ENCODE measurements at regions of chr2 and their contacts with region 1.

Region 1: DNA sequence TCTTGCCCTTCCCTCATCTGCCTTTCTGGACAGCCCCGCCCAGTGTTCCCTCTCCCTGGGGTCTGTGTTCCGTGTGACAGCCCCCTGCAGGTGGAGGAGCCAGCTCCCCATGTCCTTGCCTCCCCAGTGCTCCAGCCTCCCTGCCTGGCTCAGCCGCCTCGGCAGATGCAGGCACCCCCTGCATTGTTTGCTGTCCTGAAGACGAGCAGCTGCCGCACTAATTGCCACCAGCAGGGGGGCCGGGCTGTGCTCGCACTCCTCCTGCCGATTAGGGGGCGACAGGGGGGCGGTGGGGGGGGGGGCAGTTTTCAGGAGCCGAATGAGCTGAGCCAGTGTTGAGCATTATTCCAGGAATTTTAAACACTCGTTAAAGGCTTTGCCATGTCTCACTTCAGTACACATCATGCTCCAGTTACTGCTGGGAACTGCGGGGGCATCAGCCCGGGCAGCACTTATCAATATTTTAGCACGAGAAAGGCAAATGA is 23.3 kb downstream of the SIX3 start:
- DNase-seq: no peak
- H3K4me3 ChIP-seq: no peak overlapping the region
- CTCF ChIP-seq: no peak

Region 2: DNA sequence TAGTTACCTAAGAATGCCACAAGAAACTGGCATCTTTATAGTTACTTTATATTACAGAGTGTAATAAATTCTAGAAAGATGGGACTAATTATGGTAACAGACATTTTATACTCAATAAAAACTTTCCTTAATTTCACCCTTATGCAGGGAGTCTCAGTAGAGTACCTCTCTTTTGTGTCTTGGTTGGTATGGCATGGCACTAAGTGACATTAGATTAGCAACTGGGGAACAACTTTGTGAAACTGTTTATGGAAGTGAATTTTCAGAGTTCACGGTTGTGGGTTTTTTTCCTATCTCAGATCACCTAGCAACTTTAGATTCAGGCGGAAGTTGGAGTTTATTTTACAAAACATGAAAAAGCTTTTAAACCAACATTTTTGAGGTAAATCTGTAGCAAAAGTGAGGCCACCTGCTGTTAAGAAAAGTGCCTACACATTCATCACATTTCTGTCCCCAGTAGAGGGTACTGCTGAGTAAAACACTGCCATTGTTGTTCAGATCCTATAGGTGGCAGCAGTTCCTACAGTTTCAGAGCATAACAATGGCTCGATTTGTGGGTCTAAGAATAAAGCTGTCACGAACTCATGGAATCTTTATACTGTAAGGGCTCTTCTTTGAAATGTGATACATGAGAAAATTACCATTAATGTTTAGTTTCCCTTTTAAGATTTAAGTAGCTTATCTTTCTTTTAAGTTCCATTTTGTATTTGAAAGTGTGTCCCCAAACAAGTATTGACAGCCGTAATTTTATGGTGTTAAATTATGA is 485.5 kb before region 1 on chr2:
- in situ Hi-C with region 1: loop called (anchors 5 kb)
- DNase-seq: peak; percentile 87
- H3K4me3 ChIP-seq: no peak overlapping the region
- CTCF ChIP-seq: peak; percentile 100

Region 3: DNA sequence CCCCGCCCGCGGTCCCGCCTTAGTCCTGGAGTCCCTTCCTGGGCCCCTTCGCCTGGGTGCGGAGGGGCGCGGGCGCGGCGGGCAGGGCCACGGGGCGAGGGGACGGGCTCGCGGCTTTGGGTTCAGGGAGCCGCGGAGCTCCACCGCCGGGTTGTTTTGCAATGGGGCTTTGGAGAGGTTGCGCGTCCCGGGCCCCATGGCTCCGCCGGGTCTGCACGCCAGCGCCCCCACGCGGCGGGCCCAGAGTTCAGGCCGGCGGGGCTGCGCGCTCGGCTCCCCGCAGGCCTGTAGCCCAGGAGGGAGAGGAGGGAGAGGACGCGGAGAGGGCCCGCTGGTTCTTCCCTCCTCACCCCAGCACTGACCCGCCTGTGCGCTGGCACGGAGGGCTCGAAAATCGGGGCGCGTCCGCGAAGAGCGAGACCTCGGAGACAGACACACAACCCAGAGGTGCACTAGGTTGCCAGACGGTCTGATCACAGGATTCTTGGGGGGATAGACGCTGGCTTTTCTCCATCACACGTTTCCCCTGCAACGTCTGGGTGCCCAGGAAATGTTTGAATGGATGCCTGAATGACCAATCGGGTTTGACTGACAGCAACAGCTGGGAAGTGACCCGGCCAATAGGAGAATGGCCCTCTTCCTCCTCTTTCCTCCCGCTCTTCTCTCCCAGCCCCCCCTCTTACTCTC is 49.4 kb after region 1 on chr2:
- in situ Hi-C with region 1: loop called (anchors 5 kb)
- DNase-seq: no peak
- H3K4me3 ChIP-seq: peak overlapping the region; percentile 28
- CTCF ChIP-seq: peak; percentile 66

Region 4: GRCh38 chr2:45046786-45047185 is 82.0 kb after region 1 on chr2:
- in situ Hi-C with region 1: no loop called
- DNase-seq: peak; percentile 57
- H3K4me3 ChIP-seq: no peak overlapping the region
- CTCF ChIP-seq: no peak

Region 5: GRCh38 chr2:46363535-46364170 is 1398.9 kb after region 1 on chr2:
- in situ Hi-C with region 1: no loop called
- DNase-seq: peak; percentile 11
- H3K4me3 ChIP-seq: no peak overlapping the region
- CTCF ChIP-seq: no peak